ENCODE measurements at regions of chr5 and their contacts with region 1.

Region 1: GRCh38 chr5:45521067-45521466 is 175.1 kb downstream of the HCN1 start:
- DNase-seq: peak; percentile 63
- H3K4me3 ChIP-seq: no peak overlapping the region
- H3K27ac ChIP-seq: no peak overlapping the region
- H3K4me1 ChIP-seq: no peaks in the 10 kb centered on the region
- H3K27me3 ChIP-seq: no peaks in the 10 kb centered on the region
- CTCF ChIP-seq: peak in 1 of 2 donors; percentile 54
- POLR2A ChIP-seq: no peak

Region 2: DNA sequence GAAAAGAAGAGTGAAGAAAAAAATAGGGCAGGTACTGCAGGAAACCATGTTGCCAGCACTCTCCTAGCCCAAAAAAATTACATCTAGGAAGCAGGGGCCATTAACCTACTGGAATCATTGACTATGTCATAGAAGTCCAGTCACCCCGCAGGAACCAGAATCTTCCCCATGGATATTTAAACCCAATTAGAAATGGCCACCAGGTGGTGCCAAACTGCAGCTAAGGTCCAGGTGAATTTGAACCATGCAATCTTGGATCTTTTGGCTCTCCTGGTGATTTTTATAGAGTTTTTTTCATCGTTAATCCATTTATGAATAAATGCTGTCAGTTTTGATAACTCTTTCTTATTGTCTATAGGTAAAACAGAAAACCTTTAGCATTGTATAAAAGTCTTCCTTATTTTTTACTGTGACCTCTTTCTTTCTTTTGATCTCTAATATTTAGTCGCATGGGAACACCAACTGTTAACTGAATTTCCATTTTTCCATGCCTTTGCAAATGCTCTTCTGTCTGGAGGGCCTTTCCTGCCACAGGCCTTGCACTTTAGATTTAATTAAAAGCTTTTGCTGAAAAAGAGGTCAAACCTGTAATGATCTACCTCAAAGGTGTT is 984.3 kb before region 1 on chr5:
- CTCF ChIA-PET with region 1: no interaction called
- POLR2A ChIA-PET with region 1: no interaction called
- dilution Hi-C with region 1: no loop called
- intact Hi-C with region 1: loop called (anchors 5 kb)
- DNase-seq: peak; percentile 28
- H3K4me3 ChIP-seq: no peak overlapping the region
- H3K27ac ChIP-seq: no peak overlapping the region
- H3K4me1 ChIP-seq: no peaks in the 10 kb centered on the region
- H3K27me3 ChIP-seq: no peaks in the 10 kb centered on the region
- CTCF ChIP-seq: peak; percentile 43 to 50
- POLR2A ChIP-seq: no peak

Region 3: DNA sequence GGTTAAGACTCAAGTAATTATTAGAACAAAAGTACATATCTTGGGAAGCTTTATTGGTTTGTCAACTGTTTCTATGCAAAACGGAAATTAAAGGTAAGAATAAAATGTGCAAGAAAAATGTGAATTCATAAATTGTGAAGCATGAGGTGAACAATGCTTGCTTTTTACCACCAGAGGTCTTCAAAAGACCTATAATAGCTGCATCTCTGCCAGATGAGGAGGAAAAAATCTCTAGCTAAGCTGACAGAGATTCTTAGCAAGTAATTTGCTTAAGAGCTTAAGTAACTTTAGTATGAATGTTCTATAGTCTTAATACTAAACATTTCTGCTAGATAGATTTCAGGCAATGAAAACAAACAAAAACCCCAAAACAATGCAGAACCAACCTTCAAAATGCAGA is 658.3 kb before region 1 on chr5:
- CTCF ChIA-PET with region 1: no interaction called
- POLR2A ChIA-PET with region 1: no interaction called
- dilution Hi-C with region 1: no loop called
- intact Hi-C with region 1: loop called (anchors 5 kb)
- DNase-seq: peak; percentile 28
- H3K4me3 ChIP-seq: no peak overlapping the region
- H3K27ac ChIP-seq: no peak overlapping the region
- H3K4me1 ChIP-seq: no peaks in the 10 kb centered on the region
- H3K27me3 ChIP-seq: no peaks in the 10 kb centered on the region
- CTCF ChIP-seq: peak in 1 of 2 donors; percentile 33
- POLR2A ChIP-seq: no peak

Region 4: GRCh38 chr5:44952376-44952775 is 568.7 kb before region 1 on chr5:
- CTCF ChIA-PET with region 1: interaction called, 8 read pairs
- POLR2A ChIA-PET with region 1: no interaction called
- dilution Hi-C with region 1: no loop called
- intact Hi-C with region 1: loop called (anchors 1 kb)
- DNase-seq: peak; percentile 54
- H3K4me3 ChIP-seq: no peak overlapping the region
- H3K27ac ChIP-seq: no peak overlapping the region
- H3K4me1 ChIP-seq: no peaks in the 10 kb centered on the region
- H3K27me3 ChIP-seq: no peaks in the 10 kb centered on the region
- CTCF ChIP-seq: peak; percentile 43 to 63
- POLR2A ChIP-seq: no peak

Region 5: GRCh38 chr5:45038366-45038987 is 482.6 kb before region 1 on chr5:
- CTCF ChIA-PET with region 1: interaction called, 26 read pairs
- POLR2A ChIA-PET with region 1: no interaction called
- dilution Hi-C with region 1: no loop called
- intact Hi-C with region 1: loop called (anchors 1 kb)
- DNase-seq: peak; percentile 48
- H3K4me3 ChIP-seq: no peak overlapping the region
- H3K27ac ChIP-seq: no peak overlapping the region
- H3K4me1 ChIP-seq: no peaks in the 10 kb centered on the region
- H3K27me3 ChIP-seq: no peaks in the 10 kb centered on the region
- CTCF ChIP-seq: peak; percentile 34 to 64
- POLR2A ChIP-seq: no peak

Measured in endothelial cell of umbilical vein (primary cell).